ENCODE measurements at regions of chr4 and their contacts with region 1.

Region 1: DNA sequence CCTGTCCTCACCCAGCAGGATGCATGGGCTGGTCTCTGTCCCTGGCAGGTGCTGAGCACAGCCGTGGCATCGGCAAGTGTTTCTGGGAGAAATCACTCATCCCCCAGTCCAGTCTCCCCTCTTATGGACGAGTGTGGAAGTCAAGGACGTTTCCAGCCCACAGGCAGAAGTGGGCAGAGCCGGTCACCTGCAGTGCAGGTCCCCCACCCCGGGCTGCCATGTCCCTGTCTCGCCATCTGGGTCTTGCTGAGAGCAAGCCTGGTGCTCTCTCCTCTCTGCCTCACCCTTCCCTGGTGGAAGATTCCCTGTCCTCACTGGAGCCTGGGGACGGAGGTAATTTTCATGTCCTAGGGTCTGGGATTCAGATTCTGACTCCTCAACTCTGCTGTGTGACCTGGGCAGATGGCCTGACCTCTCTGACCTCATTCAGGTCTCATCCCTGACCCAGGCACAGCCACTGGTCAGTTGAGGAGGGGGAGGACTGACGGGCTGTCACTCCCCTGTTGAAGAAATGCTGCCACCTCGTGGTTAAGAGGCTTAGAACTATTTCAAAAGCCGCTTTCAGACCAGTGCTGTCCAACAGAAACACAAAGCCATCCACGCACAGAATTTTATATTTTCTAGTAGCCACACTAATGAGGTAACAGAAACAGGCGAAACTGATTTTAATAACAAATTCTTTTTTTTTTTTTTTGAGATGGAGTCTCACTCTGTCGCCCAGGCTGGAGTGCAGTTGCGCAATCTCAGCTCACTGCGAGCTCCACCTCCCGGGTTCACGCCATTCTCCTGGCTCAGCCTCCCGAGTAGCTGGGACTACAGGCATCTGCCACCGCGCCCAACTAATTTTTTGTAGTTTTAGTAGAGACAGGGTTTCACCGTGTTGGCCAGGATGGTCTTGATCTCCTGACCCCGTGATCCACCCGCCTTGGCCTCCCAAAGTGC is 1.8 kb downstream of the CPZ start:
- DNase-seq: peak; percentile 4
- ATAC-seq: peak; percentile 88
- H3K4me3 ChIP-seq: no peak overlapping the region
- H3K27ac ChIP-seq: no peak overlapping the region
- H3K4me1 ChIP-seq: no peaks in the 10 kb centered on the region
- H3K27me3 ChIP-seq: peaks cover 2 to 6% of the 10 kb centered on the region in 2 experiments; a peak in 3 of 4 replicates
- CTCF ChIP-seq: peak; percentile 54 to 64 (median 55)
- EP300 ChIP-seq: no peak
- POLR2A ChIP-seq: no peak
- RAD21 ChIP-seq: peak; percentile 71

Region 2: GRCh38 chr4:8241895-8242696 is 352.3 kb before region 1 on chr4:
- CTCF ChIA-PET with region 1: no interaction called
- POLR2A ChIA-PET with region 1: no interaction called
- RAD21 ChIA-PET with region 1: no interaction called
- SMC1A ChIA-PET with region 1: no interaction called
- in situ Hi-C with region 1: no loop called
- intact Hi-C with region 1: loop called (anchors 10 kb)
- DNase-seq: no peak
- ATAC-seq: peak; percentile 85
- H3K4me3 ChIP-seq: no peak overlapping the region
- H3K27ac ChIP-seq: no peak overlapping the region
- H3K4me1 ChIP-seq: peaks cover 3% of the 10 kb centered on the region
- H3K27me3 ChIP-seq: no peaks in the 10 kb centered on the region
- CTCF ChIP-seq: peak; percentile 91 to 96 (median 92)
- EP300 ChIP-seq: no peak
- POLR2A ChIP-seq: 0 out of 2 replicates have a peak, but pooled peaks have one; percentile 20
- RAD21 ChIP-seq: peak; percentile 77

Region 3: DNA sequence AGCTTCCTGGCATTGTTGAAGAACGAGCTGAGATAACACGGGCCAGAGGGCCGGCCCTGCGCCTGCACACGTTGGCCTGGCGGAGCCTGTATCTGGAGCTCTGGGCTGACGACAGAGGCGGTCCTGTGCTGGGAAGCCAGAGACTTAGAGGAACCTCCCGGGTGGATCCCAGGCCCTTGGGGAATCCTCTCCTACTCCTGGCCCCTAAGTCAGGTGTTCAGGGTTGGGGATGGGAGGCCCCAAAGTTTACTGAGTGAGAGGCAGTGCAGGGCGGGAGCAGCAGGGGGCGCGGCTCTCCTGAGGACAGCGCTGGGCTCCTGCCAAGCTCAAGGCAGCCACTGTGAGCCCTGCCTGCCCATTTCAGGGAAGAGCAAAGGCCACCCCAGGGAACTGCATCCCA is 327.3 kb before region 1 on chr4:
- CTCF ChIA-PET with region 1: interaction called, 3 read pairs
- POLR2A ChIA-PET with region 1: no interaction called
- RAD21 ChIA-PET with region 1: no interaction called
- SMC1A ChIA-PET with region 1: no interaction called
- in situ Hi-C with region 1: loop called (anchors 10 kb)
- intact Hi-C with region 1: no loop called
- DNase-seq: no peak
- ATAC-seq: peak; percentile 92
- H3K4me3 ChIP-seq: no peak overlapping the region
- H3K27ac ChIP-seq: no peak overlapping the region
- H3K4me1 ChIP-seq: no peaks in the 10 kb centered on the region
- H3K27me3 ChIP-seq: peaks cover 2 to 6% of the 10 kb centered on the region in 2 experiments; a peak in 3 of 4 replicates
- CTCF ChIP-seq: peak; percentile 53 to 74 (median 67)
- EP300 ChIP-seq: no peak
- POLR2A ChIP-seq: no peak
- RAD21 ChIP-seq: peak; percentile 49

Region 4: GRCh38 chr4:8419181-8420041 is 175.0 kb before region 1 on chr4:
- CTCF ChIA-PET with region 1: no interaction called
- POLR2A ChIA-PET with region 1: no interaction called
- RAD21 ChIA-PET with region 1: no interaction called
- SMC1A ChIA-PET with region 1: no interaction called
- in situ Hi-C with region 1: no loop called
- intact Hi-C with region 1: no loop called
- DNase-seq: peak; percentile 37
- ATAC-seq: peak; percentile 97
- H3K4me3 ChIP-seq: no peak overlapping the region
- H3K27ac ChIP-seq: peak overlapping the region; percentile 32
- H3K4me1 ChIP-seq: peaks cover 14% of the 10 kb centered on the region
- H3K27me3 ChIP-seq: no peaks in the 10 kb centered on the region
- CTCF ChIP-seq: no peak
- EP300 ChIP-seq: peak; percentile 66 to 75; a peak in 3 of 4 replicates
- POLR2A ChIP-seq: no peak
- RAD21 ChIP-seq: no peak

Region 5: DNA sequence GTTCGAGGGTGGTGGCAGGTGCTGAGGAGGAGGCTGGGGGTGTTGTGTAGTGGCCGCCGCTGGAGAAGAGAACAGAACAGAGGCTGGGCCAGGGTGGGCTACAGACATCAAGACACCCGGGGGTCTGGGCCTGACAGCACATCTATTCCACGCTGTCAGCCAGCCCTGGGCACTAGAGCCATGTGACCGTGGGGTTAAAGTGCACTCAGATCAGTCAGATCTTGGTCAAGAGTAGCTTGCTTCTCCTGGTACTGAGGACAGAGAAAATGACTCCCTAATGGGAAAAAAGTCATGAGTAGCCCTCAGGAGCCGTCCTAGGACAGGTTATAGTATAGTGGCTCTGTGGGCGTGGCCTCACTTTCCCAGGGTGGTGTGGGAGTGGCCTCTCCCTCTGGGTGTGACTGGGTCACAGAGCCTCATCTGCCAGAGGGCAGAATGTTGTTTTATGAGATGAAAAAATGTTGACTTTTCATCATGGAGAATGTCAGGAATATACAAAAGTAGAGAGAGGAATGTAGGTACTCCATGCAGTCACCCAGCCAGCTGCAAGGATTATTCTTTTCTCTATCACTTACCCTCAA is 134.4 kb before region 1 on chr4:
- CTCF ChIA-PET with region 1: no interaction called
- POLR2A ChIA-PET with region 1: no interaction called
- RAD21 ChIA-PET with region 1: no interaction called
- SMC1A ChIA-PET with region 1: no interaction called
- in situ Hi-C with region 1: loop called (anchors 5 kb)
- intact Hi-C with region 1: no loop called
- DNase-seq: no peak
- ATAC-seq: 0 out of 3 replicates have a peak, but pooled peaks have one; percentile 31
- H3K4me3 ChIP-seq: no peak overlapping the region
- H3K27ac ChIP-seq: no peak overlapping the region
- H3K4me1 ChIP-seq: no peaks in the 10 kb centered on the region
- H3K27me3 ChIP-seq: no peaks in the 10 kb centered on the region
- CTCF ChIP-seq: no peak
- EP300 ChIP-seq: no peak
- POLR2A ChIP-seq: no peak; the same call in 1 of the 2 replicates
- RAD21 ChIP-seq: no peak

Region 6: DNA sequence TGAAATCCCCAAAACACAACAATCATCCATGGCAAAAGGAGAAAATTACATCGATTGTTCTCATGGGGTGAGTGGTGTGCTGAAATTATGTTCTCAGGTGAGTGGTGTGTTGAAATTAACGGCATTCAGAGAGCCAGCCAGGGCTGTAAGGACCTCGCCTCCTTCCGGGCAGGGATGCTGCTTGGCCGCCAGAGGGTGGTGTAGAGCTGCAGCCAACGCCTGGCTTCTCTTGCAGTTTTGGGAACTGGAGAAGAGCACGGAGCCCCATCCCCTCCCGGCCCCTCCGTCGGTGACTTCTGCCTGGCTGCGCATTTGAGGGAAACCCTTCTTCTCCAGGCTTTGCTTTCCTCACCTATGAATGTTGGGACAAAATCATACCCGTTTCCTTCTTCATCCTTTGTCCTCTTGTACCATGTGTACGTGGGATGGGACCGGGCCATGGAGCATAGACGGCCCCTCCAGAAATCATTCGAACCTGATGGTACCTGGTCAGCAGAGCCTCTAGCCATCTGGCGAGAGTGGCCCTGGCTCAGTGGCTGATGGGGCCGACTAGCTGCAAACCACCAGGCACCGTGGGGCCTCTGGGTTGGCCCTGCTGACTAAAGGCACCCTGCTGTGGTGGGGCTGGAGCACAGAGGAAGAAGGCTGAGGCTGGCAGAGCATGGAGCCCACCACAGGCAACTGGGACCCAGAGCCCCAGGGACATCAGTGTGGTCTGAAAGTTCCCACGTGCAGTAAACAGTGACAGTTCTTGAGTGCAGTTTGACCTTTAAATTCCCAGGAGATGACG is 125.4 kb before region 1 on chr4:
- CTCF ChIA-PET with region 1: interaction called, 9 read pairs
- POLR2A ChIA-PET with region 1: no interaction called
- RAD21 ChIA-PET with region 1: interaction called, 3 read pairs
- SMC1A ChIA-PET with region 1: no interaction called
- in situ Hi-C with region 1: loop called (anchors 5 kb)
- intact Hi-C with region 1: loop called (anchors 1 kb)
- DNase-seq: peak; percentile 5
- ATAC-seq: peak; percentile 96
- H3K4me3 ChIP-seq: no peak overlapping the region
- H3K27ac ChIP-seq: no peak overlapping the region
- H3K4me1 ChIP-seq: no peaks in the 10 kb centered on the region
- H3K27me3 ChIP-seq: no peaks in the 10 kb centered on the region
- CTCF ChIP-seq: peak; percentile 90 to 98 (median 92)
- EP300 ChIP-seq: no peak
- POLR2A ChIP-seq: no peak
- RAD21 ChIP-seq: peak; percentile 82